GM12878 (cell line): ENCODE measurements at regions of chr2 and their contacts with region 1.

Region 1: GRCh38 chr2:20225294-20226151 is 593 bp upstream of the SDC1 start:
- DNase-seq: no peak
- ATAC-seq: peak; percentile 81
- H3K4me3 ChIP-seq: peak overlapping the region; percentile 73; the same call in 1 of the 2 replicates
- H3K27ac ChIP-seq: no peak overlapping the region
- H3K4me1 ChIP-seq: peaks cover 29% of the 10 kb centered on the region
- H3K27me3 ChIP-seq: no peaks in the 10 kb centered on the region; a peak in 1 of 4 replicates
- CTCF ChIP-seq: peak; percentile 61 to 90 (median 84)
- EP300 ChIP-seq: no peak
- POLR2A ChIP-seq: no peak; the same call in 1 of the 2 replicates
- RAD21 ChIP-seq: peak; percentile 87

Region 2: GRCh38 chr2:20106746-20107145 is 118.8 kb before region 1 on chr2:
- CTCF ChIA-PET with region 1: interaction called, 26 read pairs
- POLR2A ChIA-PET with region 1: no interaction called
- RAD21 ChIA-PET with region 1: interaction called, 16 read pairs
- SMC1A ChIA-PET with region 1: interaction called, 7 read pairs
- in situ Hi-C with region 1: no loop called
- intact Hi-C with region 1: no loop called
- DNase-seq: no peak
- ATAC-seq: no peak
- H3K4me3 ChIP-seq: no peak overlapping the region
- H3K27ac ChIP-seq: no peak overlapping the region
- H3K4me1 ChIP-seq: no peaks in the 10 kb centered on the region
- H3K27me3 ChIP-seq: no peaks in the 10 kb centered on the region
- CTCF ChIP-seq: no peak
- EP300 ChIP-seq: no peak
- POLR2A ChIP-seq: no peak
- RAD21 ChIP-seq: no peak

Region 3: GRCh38 chr2:20145497-20146193 is 79.9 kb before region 1 on chr2:
- CTCF ChIA-PET with region 1: interaction called, 284 read pairs
- POLR2A ChIA-PET with region 1: interaction called, 9 read pairs
- RAD21 ChIA-PET with region 1: interaction called, 67 read pairs
- SMC1A ChIA-PET with region 1: interaction called, 191 read pairs
- in situ Hi-C with region 1: no loop called
- intact Hi-C with region 1: no loop called
- DNase-seq: peak; percentile 68
- ATAC-seq: peak; percentile 87
- H3K4me3 ChIP-seq: 0 out of 2 replicates have a peak overlapping the region, but pooled peaks have one; percentile 26
- H3K27ac ChIP-seq: peak overlapping the region; percentile 76
- H3K4me1 ChIP-seq: peaks cover 49% of the 10 kb centered on the region
- H3K27me3 ChIP-seq: no peaks in the 10 kb centered on the region
- CTCF ChIP-seq: no peak
- EP300 ChIP-seq: peak in 1 of 2 experiments; percentile 50; a peak in 1 of 4 replicates
- POLR2A ChIP-seq: no peak; the same call in 1 of the 2 replicates
- RAD21 ChIP-seq: no peak

Region 4: DNA sequence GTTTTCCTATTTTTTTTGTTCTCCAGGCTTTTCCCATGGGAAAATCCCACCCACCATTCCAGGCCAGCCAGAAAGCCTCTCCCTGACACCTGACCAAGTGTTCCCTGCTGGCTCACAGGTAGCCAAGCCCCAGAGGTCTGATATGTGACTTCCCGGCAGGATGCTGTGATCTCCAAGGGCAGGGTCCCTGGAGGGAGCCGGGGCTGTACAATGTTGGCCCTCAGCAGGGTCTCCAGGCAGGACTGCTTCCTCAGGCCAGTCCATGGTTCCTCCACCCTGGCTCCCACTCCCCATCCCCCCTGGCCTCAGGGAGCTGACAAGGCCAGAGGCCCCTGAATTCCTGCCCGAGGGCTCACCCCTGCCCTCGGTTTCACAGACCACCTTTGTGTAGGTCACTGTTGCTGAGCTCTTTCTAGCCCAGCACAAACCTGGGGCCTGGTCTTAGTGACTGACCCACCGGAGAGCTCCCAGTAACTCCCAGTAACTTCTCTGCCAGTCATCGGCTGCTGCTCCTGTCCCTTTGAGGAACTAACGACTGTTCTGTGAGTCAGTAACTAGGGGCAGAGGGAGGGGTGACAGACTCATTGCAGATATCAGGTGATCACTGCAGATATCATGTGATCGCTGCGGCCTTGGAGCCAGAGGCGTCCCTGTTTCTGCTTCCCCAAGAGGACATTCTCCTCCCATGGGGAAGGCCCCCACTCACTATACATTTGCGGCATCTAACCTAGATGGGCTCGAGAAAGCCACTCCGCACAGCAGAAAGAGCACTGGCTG is 39.3 kb before region 1 on chr2:
- CTCF ChIA-PET with region 1: interaction called, 10 read pairs
- POLR2A ChIA-PET with region 1: interaction called, 5 read pairs
- RAD21 ChIA-PET with region 1: interaction called, 43 read pairs
- SMC1A ChIA-PET with region 1: interaction called, 5 read pairs
- in situ Hi-C with region 1: no loop called
- intact Hi-C with region 1: no loop called
- DNase-seq: no peak
- ATAC-seq: peak; percentile 72
- H3K4me3 ChIP-seq: no peak overlapping the region
- H3K27ac ChIP-seq: no peak overlapping the region
- H3K4me1 ChIP-seq: peaks cover 14% of the 10 kb centered on the region
- H3K27me3 ChIP-seq: no peaks in the 10 kb centered on the region; a peak in 1 of 4 replicates
- CTCF ChIP-seq: no peak
- EP300 ChIP-seq: no peak; a peak in 1 of 4 replicates
- POLR2A ChIP-seq: 0 out of 2 replicates have a peak, but pooled peaks have one; percentile 42
- RAD21 ChIP-seq: no peak

Region 5: DNA sequence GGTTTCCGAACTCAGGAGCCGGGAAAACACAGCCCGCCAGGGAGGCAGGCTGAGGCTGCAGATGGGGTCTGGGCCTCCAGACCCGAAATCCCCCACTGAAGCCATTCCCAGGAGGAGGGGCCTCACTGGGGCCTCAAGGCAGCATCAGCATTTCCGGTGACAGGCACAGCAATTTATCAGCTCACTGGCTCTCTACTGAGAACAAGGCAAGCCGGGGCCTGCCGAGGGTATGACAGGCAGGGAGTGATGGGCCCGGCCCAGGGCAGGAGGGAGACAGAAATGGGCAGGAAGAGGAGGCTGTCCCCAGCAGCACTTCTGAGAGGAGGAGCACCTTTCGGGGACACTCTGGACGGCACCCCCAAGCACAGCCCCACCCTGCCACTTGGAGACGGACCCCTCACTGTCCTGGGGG is 13.1 kb before region 1 on chr2:
- CTCF ChIA-PET with region 1: interaction called, 39 read pairs
- POLR2A ChIA-PET with region 1: interaction called, 38 read pairs
- RAD21 ChIA-PET with region 1: interaction called, 69 read pairs
- SMC1A ChIA-PET with region 1: interaction called, 15 read pairs
- in situ Hi-C with region 1: no loop called
- intact Hi-C with region 1: no loop called
- DNase-seq: no peak
- ATAC-seq: peak; percentile 73
- H3K4me3 ChIP-seq: peak overlapping the region; percentile 20; the same call in 1 of the 2 replicates
- H3K27ac ChIP-seq: peak overlapping the region; percentile 78
- H3K4me1 ChIP-seq: peaks cover 63% of the 10 kb centered on the region
- H3K27me3 ChIP-seq: no peaks in the 10 kb centered on the region
- CTCF ChIP-seq: no peak
- EP300 ChIP-seq: no peak
- POLR2A ChIP-seq: peak; percentile 78
- RAD21 ChIP-seq: no peak

Region 6: DNA sequence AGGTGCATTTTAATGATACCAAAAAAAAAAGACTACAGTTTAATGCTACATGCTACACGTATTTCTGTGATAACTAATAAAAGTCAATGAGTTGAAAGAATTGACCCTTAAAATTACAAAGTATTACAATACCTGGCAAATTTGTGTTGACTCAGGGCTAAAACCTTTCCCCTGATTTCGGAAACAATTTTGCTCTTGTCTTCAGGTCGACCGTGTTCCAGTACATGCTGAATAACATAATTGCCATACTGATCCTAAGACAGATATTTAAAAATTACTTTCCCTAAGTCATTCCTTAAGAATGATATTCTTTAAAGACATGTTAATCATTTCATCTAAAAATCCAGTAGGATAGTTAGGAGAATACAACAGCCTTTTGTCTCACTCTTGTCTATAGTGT is 29.2 kb after region 1 on chr2:
- CTCF ChIA-PET with region 1: no interaction called
- POLR2A ChIA-PET with region 1: no interaction called
- RAD21 ChIA-PET with region 1: no interaction called
- SMC1A ChIA-PET with region 1: no interaction called
- in situ Hi-C with region 1: no loop called
- intact Hi-C with region 1: no loop called
- DNase-seq: no peak
- ATAC-seq: no peak
- H3K4me3 ChIP-seq: no peak overlapping the region
- H3K27ac ChIP-seq: no peak overlapping the region
- H3K4me1 ChIP-seq: no peaks in the 10 kb centered on the region
- H3K27me3 ChIP-seq: no peaks in the 10 kb centered on the region
- CTCF ChIP-seq: no peak
- EP300 ChIP-seq: no peak
- POLR2A ChIP-seq: no peak
- RAD21 ChIP-seq: no peak